SK-N-SH (cell line): ENCODE measurements at regions of chr1 and their contacts with region 1.

Region 1: DNA sequence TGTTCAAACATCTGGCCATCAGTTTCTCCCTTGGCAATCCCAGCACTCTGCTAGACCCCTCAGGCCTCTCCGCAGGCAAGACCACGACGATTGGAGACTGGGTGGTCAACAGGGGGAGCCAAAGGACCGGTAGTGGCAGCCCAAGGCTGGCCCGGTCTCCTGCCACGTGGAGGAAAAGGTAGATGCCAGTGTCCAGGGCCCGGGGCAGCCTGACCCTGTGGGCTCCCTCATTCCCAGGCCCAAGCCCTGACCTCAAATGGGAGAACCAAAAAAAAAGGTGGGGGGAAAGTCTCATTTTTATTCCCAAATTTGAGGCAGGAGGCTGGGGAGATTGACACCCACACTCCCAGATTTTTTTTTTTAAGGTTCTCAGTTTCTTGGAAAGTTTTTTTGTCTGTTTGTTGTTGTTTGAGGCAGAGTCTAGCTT is 24.8 kb downstream of the S100A6 start:
- DNase-seq: peak; percentile 89
- H3K4me3 ChIP-seq: no peak overlapping the region; a peak in 1 of 4 replicates
- H3K27ac ChIP-seq: peak overlapping the region in 1 of 2 experiments; percentile 9; a peak in 1 of 4 replicates
- H3K4me1 ChIP-seq: peaks cover 4 to 20% of the 10 kb centered on the region in 2 experiments; a peak in 3 of 4 replicates
- H3K27me3 ChIP-seq: no peaks in the 10 kb centered on the region
- CTCF ChIP-seq: peak; percentile 95
- EP300 ChIP-seq: no peak
- RAD21 ChIP-seq: peak; percentile 96

Region 2: DNA sequence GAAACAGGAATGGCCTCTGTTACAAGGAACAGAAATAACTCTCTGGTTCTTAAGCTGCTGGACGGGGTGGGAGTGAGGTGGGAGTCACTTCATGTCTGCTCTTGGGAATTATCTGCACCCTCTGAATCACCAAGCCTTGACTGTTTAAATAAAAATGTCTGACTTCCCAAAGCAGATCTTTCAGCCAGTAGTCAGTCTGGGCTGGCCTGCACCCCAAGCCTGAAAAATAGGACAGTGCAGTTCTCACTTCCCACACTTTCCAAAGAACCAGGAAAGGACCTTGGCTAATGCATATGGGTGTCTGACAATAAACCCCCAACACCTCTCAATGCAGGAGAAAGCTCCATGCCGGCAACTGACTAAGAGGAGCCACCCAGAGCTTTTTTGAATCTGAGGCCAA is 51.3 kb before region 1 on chr1:
- CTCF ChIA-PET with region 1: no interaction called
- POLR2A ChIA-PET with region 1: no interaction called
- DNase-seq: no peak
- H3K4me3 ChIP-seq: no peak overlapping the region
- H3K27ac ChIP-seq: no peak overlapping the region
- H3K4me1 ChIP-seq: peaks cover 0 to 2% of the 10 kb centered on the region in 2 experiments; a peak in 1 of 4 replicates
- H3K27me3 ChIP-seq: peaks cover 25% of the 10 kb centered on the region; the same call in 1 of the 2 replicates
- CTCF ChIP-seq: no peak
- EP300 ChIP-seq: no peak
- RAD21 ChIP-seq: no peak

Region 3: DNA sequence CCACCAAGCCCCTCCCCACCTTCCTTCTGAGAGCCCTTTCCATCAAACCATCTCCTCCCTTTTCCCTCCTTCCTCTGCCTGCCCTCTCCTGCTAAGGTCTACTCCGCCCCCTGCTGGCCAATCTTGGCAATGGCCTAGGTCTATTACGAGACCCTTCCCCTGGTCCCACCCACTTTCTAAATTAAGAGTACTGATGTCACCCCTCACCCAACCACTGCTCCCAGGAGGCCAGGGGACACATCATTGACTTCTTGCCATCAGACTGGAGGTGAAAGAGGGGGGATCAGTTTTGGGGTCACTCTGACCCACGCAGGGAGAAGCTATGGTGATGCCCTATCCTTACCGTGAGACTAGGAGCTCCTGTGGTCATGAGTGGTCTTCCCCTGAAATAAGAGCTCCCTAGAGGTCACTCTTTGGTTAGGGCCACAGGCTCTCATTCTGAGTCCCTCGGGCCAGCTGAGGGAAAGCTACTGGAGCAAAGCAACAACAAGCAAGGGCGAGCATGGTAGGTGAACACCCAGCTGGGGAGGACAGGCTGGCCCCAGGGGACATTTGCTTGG is 15.9 kb before region 1 on chr1:
- CTCF ChIA-PET with region 1: interaction called, 22 read pairs
- POLR2A ChIA-PET with region 1: no interaction called
- DNase-seq: peak; percentile 79
- H3K4me3 ChIP-seq: no peak overlapping the region; a peak in 1 of 4 replicates
- H3K27ac ChIP-seq: no peak overlapping the region
- H3K4me1 ChIP-seq: peaks cover 0 to 5% of the 10 kb centered on the region in 2 experiments; a peak in 1 of 4 replicates
- H3K27me3 ChIP-seq: peaks cover 10% of the 10 kb centered on the region; the same call in 1 of the 2 replicates
- CTCF ChIP-seq: peak; percentile 96
- EP300 ChIP-seq: no peak
- RAD21 ChIP-seq: peak; percentile 88

Region 4: GRCh38 chr1:153545067-153546055 is 34.4 kb after region 1 on chr1 and contains the start of gene S100A4:
- CTCF ChIA-PET with region 1: interaction called, 20 read pairs
- POLR2A ChIA-PET with region 1: no interaction called
- DNase-seq: peak; percentile 83
- H3K4me3 ChIP-seq: no peak within 1 kb of the TSS
- H3K27ac ChIP-seq: peak within 1 kb of the TSS; percentile 72 to 76
- H3K4me1 ChIP-seq: peaks cover 58 to 65% of the 10 kb centered on the region in 2 experiments; a peak in 3 of 4 replicates
- H3K27me3 ChIP-seq: no peaks in the 10 kb centered on the region
- CTCF ChIP-seq: no peak
- EP300 ChIP-seq: peak in 1 of 2 experiments; percentile 52; a peak in 1 of 4 replicates
- RAD21 ChIP-seq: no peak
- polyA plus RNA-seq, gene S100A4: 24.6 and 25.4 TPM in 2 replicates

Region 5: DNA sequence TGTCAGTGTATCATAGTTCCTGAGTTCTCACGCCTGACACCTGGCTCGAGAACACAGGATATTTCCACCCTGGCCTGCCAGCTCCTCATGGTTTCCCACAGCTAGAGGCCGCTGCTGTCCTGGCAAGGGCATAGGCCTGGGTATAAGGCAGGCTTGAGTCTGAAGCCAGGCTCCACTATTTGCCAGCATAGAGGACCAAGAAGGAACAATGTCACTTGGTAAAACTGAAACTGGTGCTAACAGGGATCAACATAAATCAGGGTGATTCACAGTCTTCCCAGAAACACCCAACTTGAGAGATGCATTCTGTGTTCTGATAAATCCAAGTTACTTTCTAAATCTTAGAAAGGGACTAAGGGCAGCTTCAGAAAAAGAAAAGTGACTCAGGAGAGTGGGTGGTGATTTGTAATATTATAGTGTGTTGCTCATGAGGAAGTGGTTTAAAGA is 61.6 kb after region 1 on chr1:
- CTCF ChIA-PET with region 1: interaction called, 283 read pairs
- POLR2A ChIA-PET with region 1: no interaction called
- DNase-seq: peak; percentile 78
- H3K4me3 ChIP-seq: no peak overlapping the region
- H3K27ac ChIP-seq: peak overlapping the region; percentile 4 to 77; a peak in 3 of 4 replicates
- H3K4me1 ChIP-seq: peaks cover 12 to 15% of the 10 kb centered on the region in 2 experiments
- H3K27me3 ChIP-seq: no peaks in the 10 kb centered on the region
- CTCF ChIP-seq: peak; percentile 96
- EP300 ChIP-seq: no peak
- RAD21 ChIP-seq: peak; percentile 91

Region 6: GRCh38 chr1:153617675-153618074 is 106.7 kb after region 1 on chr1:
- CTCF ChIA-PET with region 1: interaction called, 51 read pairs
- POLR2A ChIA-PET with region 1: no interaction called
- DNase-seq: peak; percentile 82
- H3K4me3 ChIP-seq: no peak overlapping the region
- H3K27ac ChIP-seq: no peak overlapping the region
- H3K4me1 ChIP-seq: peaks cover 0 to 4% of the 10 kb centered on the region in 2 experiments; a peak in 1 of 4 replicates
- H3K27me3 ChIP-seq: no peaks in the 10 kb centered on the region
- CTCF ChIP-seq: peak; percentile 81
- EP300 ChIP-seq: no peak
- RAD21 ChIP-seq: peak; percentile 64

Region 7: GRCh38 chr1:153639280-153639679 is 128.3 kb after region 1 on chr1:
- CTCF ChIA-PET with region 1: interaction called, 16 read pairs
- POLR2A ChIA-PET with region 1: no interaction called
- DNase-seq: no peak
- H3K4me3 ChIP-seq: no peak overlapping the region
- H3K27ac ChIP-seq: no peak overlapping the region
- H3K4me1 ChIP-seq: no peaks in the 10 kb centered on the region; a peak in 1 of 4 replicates
- H3K27me3 ChIP-seq: no peaks in the 10 kb centered on the region
- CTCF ChIP-seq: no peak
- EP300 ChIP-seq: no peak
- RAD21 ChIP-seq: no peak